ENCODE measurements at regions of chr11 and their contacts with region 1.

Region 1: DNA sequence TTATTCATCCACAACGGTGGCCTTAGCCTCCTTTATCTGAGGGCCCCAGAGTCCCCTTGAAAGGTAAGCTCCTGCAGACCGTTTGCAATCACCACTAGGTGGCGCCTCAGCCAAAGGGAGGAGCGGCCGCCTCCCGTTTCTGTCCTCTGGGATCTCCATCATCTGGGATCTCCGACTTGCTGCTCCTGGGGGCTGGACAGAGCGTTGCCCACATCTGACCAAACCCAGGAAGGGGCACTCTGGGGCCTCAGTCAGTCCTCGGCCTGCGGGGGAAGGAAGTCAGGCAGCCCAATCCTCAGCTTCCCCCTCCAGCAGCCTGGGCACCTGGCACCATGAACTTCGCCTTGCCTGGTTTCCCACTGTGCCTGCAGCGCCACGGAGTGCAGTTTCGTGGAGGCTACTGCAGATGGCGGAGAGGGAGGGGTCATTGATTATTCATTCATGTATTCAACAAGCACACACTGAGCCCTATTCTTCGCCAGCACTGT is 23.5 kb downstream of the TP53I11 start:
- DNase-seq: peak; percentile 92
- H3K4me3 ChIP-seq: no peak overlapping the region
- H3K27ac ChIP-seq: no peak overlapping the region
- H3K4me1 ChIP-seq: peaks cover 5% of the 10 kb centered on the region
- H3K27me3 ChIP-seq: no peaks in the 10 kb centered on the region
- CTCF ChIP-seq: peak; percentile 100

Region 2: GRCh38 chr11:44755556-44756523 is 171.4 kb before region 1 on chr11:
- CTCF ChIA-PET with region 1: no interaction called
- POLR2A ChIA-PET with region 1: no interaction called
- intact Hi-C with region 1: no loop called
- DNase-seq: no peak
- H3K4me3 ChIP-seq: no peak overlapping the region
- H3K27ac ChIP-seq: no peak overlapping the region
- H3K4me1 ChIP-seq: peaks cover 38% of the 10 kb centered on the region
- H3K27me3 ChIP-seq: no peaks in the 10 kb centered on the region
- CTCF ChIP-seq: no peak

Region 3: DNA sequence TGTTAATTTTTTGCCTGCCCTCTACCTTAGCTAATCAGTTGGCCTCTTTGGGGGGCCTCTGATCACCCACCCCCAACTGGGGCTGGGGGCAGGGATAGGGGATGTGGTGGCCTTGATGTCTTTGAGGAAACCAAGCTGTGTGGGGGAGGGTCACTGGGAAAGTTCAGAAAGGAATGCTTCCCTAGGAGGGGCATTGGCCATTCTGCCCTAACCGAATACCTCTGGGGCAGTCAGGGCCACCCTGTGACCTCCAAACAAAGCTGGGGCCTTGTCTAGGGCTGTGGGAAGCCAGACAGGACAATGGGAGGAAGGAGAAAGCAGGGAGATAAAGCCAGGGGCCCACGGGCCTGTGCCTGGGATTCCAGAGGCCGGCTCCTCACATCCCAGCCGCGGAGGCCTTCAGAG is 102.9 kb before region 1 on chr11:
- CTCF ChIA-PET with region 1: no interaction called
- POLR2A ChIA-PET with region 1: no interaction called
- intact Hi-C with region 1: no loop called
- DNase-seq: no peak
- H3K4me3 ChIP-seq: no peak overlapping the region
- H3K27ac ChIP-seq: no peak overlapping the region
- H3K4me1 ChIP-seq: no peaks in the 10 kb centered on the region
- H3K27me3 ChIP-seq: no peaks in the 10 kb centered on the region
- CTCF ChIP-seq: no peak

Region 4: DNA sequence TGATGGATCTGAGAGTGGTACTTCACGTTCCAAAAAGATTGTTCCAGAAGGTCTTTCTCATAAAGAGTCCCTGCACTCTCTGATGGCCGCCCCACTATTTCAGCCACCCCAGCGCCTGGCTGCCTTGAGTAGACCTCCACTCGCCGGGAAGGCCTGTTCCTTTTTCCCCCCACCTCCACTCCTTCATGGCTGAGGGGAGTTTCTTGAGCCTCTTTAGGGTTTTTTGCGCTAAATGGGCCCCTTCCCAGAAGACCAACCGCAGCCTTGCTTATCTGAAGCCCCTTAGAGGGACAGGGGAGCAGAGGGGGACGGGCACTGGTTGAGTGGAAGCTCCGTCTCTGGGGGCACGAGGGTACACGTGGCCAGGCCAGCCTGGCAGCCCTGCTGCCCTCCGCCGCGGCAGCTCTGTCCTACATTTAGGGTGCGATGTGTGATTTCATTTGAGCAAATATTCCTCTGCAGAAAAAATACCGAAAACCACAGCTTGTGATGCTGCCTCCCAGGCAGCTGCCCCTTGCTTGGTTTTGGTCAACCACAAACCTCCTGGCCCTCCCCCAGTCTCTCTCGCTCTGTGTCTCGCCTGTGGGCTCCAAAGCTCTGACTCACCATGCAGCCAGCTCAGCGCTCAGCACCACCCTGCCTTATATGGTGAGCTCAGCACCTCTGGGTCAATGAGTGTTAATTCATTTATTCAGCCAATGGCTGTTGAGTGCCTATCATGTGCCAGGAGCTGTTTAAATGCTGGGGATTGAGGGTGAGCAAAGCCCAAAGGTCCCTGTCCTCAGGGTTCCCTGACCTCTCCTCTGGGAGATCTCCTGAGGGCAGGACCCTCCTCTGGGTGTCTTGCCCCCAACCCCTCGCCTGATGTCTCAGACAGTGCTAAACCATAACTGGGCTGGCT is 65.1 kb before region 1 on chr11:
- CTCF ChIA-PET with region 1: no interaction called
- POLR2A ChIA-PET with region 1: no interaction called
- intact Hi-C with region 1: loop called (anchors 10 kb)
- DNase-seq: peak; percentile 91
- H3K4me3 ChIP-seq: no peak overlapping the region
- H3K27ac ChIP-seq: peak overlapping the region; percentile 49
- H3K4me1 ChIP-seq: peaks cover 14% of the 10 kb centered on the region
- H3K27me3 ChIP-seq: no peaks in the 10 kb centered on the region
- CTCF ChIP-seq: no peak

Region 5: DNA sequence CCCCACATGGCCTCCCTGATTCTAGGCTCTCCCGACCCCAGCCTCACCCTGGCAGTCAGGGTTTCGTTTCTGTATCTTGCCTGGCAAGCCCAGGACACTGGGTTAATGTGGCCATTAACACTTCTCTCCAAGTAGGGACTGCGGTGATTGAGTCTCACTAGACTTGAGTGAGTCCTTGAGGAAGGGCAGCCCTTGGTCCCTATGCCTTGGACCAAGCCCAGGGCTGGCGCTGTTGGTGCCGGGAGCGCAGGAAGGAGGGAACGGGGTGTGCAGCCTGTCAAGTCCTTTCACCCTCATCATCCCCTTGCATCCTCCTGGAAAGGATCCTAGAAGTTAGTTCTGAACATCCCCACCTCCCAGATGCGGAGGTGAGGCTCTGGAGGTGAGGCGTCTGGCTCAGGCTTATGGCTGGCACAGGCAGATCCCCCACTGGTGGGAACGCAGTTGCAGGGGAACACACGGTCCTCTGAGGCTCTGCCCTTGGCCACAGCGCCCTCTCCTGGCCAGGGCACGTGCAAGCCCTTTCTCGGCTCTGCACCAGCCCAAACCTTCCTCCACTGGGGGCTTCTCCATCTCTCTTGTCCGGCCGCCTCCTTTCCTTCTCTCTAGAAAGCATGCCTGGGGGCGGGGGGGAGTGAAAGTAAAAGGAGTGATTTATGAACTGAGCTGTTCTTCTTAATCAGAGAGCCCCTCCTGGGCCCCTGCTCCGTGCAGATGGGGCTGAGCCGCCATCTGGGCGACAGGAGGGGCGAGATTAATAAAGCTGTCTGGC is 33.2 kb before region 1 on chr11:
- CTCF ChIA-PET with region 1: no interaction called
- POLR2A ChIA-PET with region 1: no interaction called
- intact Hi-C with region 1: no loop called
- DNase-seq: peak; percentile 93
- H3K4me3 ChIP-seq: no peak overlapping the region
- H3K27ac ChIP-seq: no peak overlapping the region
- H3K4me1 ChIP-seq: peaks cover 12% of the 10 kb centered on the region
- H3K27me3 ChIP-seq: no peaks in the 10 kb centered on the region
- CTCF ChIP-seq: peak; percentile 100

Region 6: DNA sequence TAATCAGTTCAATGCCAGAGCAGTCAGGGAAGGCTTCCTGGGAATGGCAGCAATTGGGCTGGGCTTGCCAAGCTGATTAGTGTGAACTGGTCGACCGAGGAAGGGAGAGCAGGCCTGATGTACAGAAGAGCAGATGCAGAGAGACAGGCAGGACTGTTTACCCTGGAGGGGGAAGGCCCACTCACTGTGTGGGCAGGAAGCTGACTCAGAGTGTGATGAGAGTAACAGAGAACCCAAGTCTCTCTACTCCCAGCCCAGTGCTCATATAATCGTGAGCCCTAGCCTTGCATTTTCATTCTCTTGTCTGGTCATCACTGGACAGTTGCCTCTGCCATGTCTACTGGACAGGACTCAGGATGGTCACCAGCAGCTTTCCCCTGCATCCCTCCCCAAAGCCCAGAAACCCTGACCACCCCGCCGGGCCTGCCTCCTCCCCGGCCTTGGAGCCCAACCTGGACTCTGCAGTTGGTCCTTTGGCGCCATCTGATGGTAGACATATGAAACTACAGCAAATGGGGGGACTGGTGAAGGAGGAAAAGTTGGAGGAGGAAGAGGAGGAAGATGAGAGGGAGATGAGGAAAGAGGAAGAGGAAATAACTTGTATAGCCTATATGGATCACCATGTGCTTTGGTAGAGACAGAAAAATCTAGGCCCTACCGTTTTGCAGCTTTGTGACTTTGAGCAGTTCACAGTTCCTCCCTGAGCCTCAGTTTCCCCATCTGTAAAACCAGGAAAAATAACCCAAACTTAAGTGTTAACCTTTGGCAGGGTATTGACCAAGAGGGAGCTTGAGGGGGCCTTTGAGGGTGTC is 175.8 kb after region 1 on chr11:
- CTCF ChIA-PET with region 1: interaction called, 141 read pairs
- POLR2A ChIA-PET with region 1: no interaction called
- intact Hi-C with region 1: loop called (anchors 1 kb)
- DNase-seq: peak; percentile 85
- H3K4me3 ChIP-seq: no peak overlapping the region
- H3K27ac ChIP-seq: no peak overlapping the region
- H3K4me1 ChIP-seq: no peaks in the 10 kb centered on the region
- H3K27me3 ChIP-seq: peaks cover 26% of the 10 kb centered on the region
- CTCF ChIP-seq: peak; percentile 100

Region 7: GRCh38 chr11:45332276-45332934 is 405.2 kb after region 1 on chr11:
- CTCF ChIA-PET with region 1: no interaction called
- POLR2A ChIA-PET with region 1: no interaction called
- intact Hi-C with region 1: loop called (anchors 2 kb)
- DNase-seq: peak; percentile 80
- H3K4me3 ChIP-seq: no peak overlapping the region
- H3K27ac ChIP-seq: no peak overlapping the region
- H3K4me1 ChIP-seq: peaks cover 11% of the 10 kb centered on the region
- H3K27me3 ChIP-seq: no peaks in the 10 kb centered on the region
- CTCF ChIP-seq: peak; percentile 91